ENCODE measurements at regions of chr6 and their contacts with region 1.

Region 1: GRCh38 chr6:125769147-125769783 is 19.8 kb downstream of the HEY2 start:
- DNase-seq: no peak
- ATAC-seq: no peak
- H3K4me3 ChIP-seq: no peak overlapping the region
- H3K4me3 Mint-ChIP-seq: no peak overlapping the region
- H3K27ac ChIP-seq: no peak overlapping the region
- H3K27ac Mint-ChIP-seq: no peak overlapping the region
- H3K4me1 ChIP-seq: no peaks in the 10 kb centered on the region
- H3K4me1 Mint-ChIP-seq: peaks cover 2% of the 10 kb centered on the region
- H3K27me3 ChIP-seq: no peaks in the 10 kb centered on the region
- H3K27me3 Mint-ChIP-seq: peaks cover 16% of the 10 kb centered on the region
- CTCF ChIP-seq: no peak

Region 2: DNA sequence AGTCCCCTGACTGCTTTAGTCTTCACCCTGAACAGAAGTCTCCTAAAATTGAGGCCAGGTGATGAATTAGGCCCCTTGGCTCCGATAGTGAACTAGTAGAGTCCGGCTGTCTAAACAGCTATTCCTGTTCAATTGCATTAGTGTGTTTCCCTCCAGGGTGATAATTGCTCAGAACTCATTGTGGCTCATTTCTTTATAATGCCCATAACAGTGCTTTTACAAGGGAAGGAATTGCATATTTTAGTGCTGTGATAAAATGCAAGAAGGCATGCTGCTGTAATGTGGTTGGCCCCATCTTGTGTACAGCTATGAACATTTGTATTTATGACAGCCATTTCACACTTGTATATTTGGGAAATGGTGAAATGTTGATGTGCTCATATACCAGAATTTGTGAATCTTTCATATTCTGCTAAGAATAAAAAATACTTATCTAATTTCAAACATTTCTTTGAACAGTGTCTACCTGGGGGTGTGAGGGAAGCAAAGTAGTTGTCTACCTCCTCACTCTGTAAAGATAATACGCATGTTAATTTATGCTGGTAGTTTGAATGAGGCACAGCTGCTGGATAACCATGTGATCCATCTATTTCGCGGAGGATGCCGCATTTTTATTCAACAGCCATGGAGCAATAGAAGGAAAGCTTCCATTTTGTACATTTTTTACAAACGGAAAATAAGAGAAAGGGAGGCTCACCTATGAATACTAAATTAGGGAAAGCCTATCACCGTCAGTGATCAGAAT is 1514.2 kb before region 1 on chr6:
- CTCF ChIA-PET with region 1: no interaction called
- POLR2A ChIA-PET with region 1: no interaction called
- intact Hi-C with region 1: no loop called
- DNase-seq: no peak
- ATAC-seq: no peak
- H3K4me3 ChIP-seq: no peak overlapping the region
- H3K4me3 Mint-ChIP-seq: no peak overlapping the region
- H3K27ac ChIP-seq: no peak overlapping the region
- H3K27ac Mint-ChIP-seq: no peak overlapping the region
- H3K4me1 ChIP-seq: no peaks in the 10 kb centered on the region
- H3K4me1 Mint-ChIP-seq: no peaks in the 10 kb centered on the region
- H3K27me3 ChIP-seq: no peaks in the 10 kb centered on the region
- H3K27me3 Mint-ChIP-seq: no peaks in the 10 kb centered on the region
- CTCF ChIP-seq: no peak

Region 3: DNA sequence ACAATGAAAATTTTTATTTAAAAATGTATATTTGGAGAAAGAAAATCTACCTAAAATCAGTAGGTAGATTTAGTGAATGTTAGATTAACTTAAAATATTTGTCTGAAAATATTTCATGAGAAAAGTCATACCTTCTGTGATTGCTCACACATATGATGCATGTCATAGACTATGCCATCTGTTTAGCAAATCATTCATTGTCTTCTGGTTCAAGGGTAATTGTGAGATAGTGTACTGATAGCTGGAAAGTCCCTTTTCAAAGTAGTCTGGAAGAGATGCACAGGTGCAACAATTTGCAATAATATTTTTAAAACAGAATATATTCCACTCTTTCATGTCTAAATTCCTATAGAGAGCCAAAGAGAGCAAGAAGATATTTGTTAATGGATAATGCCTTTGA is 828.0 kb before region 1 on chr6:
- CTCF ChIA-PET with region 1: no interaction called
- POLR2A ChIA-PET with region 1: no interaction called
- intact Hi-C with region 1: no loop called
- DNase-seq: no peak
- ATAC-seq: no peak
- H3K4me3 ChIP-seq: no peak overlapping the region
- H3K4me3 Mint-ChIP-seq: no peak overlapping the region
- H3K27ac ChIP-seq: no peak overlapping the region
- H3K27ac Mint-ChIP-seq: no peak overlapping the region
- H3K4me1 ChIP-seq: no peaks in the 10 kb centered on the region
- H3K4me1 Mint-ChIP-seq: no peaks in the 10 kb centered on the region
- H3K27me3 ChIP-seq: no peaks in the 10 kb centered on the region
- H3K27me3 Mint-ChIP-seq: peaks cover 2% of the 10 kb centered on the region
- CTCF ChIP-seq: no peak

Region 4: GRCh38 chr6:125153391-125154117 is 615.7 kb before region 1 on chr6 and contains the start of gene TPD52L1:
- CTCF ChIA-PET with region 1: interaction called, 3 read pairs
- POLR2A ChIA-PET with region 1: no interaction called
- intact Hi-C with region 1: loop called (anchors 1 to 2 kb)
- DNase-seq: peak; percentile 7 to 64 (median 39)
- ATAC-seq: peak; percentile 79
- H3K4me3 ChIP-seq: peak within 1 kb of the TSS; percentile 44 to 46
- H3K4me3 Mint-ChIP-seq: peak within 1 kb of the TSS; percentile 75
- H3K27ac ChIP-seq: no peak within 1 kb of the TSS
- H3K27ac Mint-ChIP-seq: no peak within 1 kb of the TSS
- H3K4me1 ChIP-seq: peaks cover 5% of the 10 kb centered on the region
- H3K4me1 Mint-ChIP-seq: peaks cover 8% of the 10 kb centered on the region
- H3K27me3 ChIP-seq: peaks cover 0 to 14% of the 10 kb centered on the region in 2 experiments
- H3K27me3 Mint-ChIP-seq: peaks cover 47% of the 10 kb centered on the region
- CTCF ChIP-seq: peak; percentile 39
- total RNA-seq, gene TPD52L1: not detected

Region 5: GRCh38 chr6:125363039-125363823 is 406.0 kb before region 1 on chr6:
- CTCF ChIA-PET with region 1: no interaction called
- POLR2A ChIA-PET with region 1: no interaction called
- intact Hi-C with region 1: no loop called
- DNase-seq: no peak
- ATAC-seq: no peak
- H3K4me3 ChIP-seq: no peak overlapping the region
- H3K4me3 Mint-ChIP-seq: no peak overlapping the region
- H3K27ac ChIP-seq: no peak overlapping the region
- H3K27ac Mint-ChIP-seq: no peak overlapping the region
- H3K4me1 ChIP-seq: no peaks in the 10 kb centered on the region
- H3K4me1 Mint-ChIP-seq: peaks cover 8% of the 10 kb centered on the region
- H3K27me3 ChIP-seq: peaks cover 0 to 4% of the 10 kb centered on the region in 2 experiments
- H3K27me3 Mint-ChIP-seq: peaks cover 45% of the 10 kb centered on the region
- CTCF ChIP-seq: no peak

Region 6: DNA sequence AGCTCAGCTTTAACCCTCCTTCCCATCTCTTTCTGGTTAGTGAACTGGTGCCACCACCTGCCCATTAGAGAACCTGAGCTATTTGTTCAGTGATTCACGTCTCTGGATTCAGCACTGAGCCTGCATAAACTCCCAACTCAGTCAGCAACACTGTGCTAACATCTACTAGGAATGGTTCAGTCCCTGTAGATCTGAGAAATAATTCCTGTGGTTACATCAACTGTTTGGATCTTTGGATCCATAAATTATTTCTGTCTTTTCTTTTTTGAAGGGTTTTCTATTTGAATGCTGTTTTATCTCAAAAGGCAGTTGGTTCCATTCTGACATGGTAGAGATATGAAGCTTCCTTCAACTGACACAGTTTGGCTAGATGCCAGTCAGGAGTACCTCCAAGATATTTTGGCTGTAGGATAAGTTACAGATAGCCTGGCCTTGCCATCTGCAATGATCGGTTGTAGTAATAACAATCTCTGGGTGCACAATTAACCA is 342.9 kb after region 1 on chr6:
- CTCF ChIA-PET with region 1: no interaction called
- POLR2A ChIA-PET with region 1: no interaction called
- intact Hi-C with region 1: no loop called
- DNase-seq: no peak
- ATAC-seq: no peak
- H3K4me3 ChIP-seq: no peak overlapping the region
- H3K4me3 Mint-ChIP-seq: no peak overlapping the region
- H3K27ac ChIP-seq: no peak overlapping the region
- H3K27ac Mint-ChIP-seq: no peak overlapping the region
- H3K4me1 ChIP-seq: no peaks in the 10 kb centered on the region
- H3K4me1 Mint-ChIP-seq: no peaks in the 10 kb centered on the region
- H3K27me3 ChIP-seq: no peaks in the 10 kb centered on the region
- H3K27me3 Mint-ChIP-seq: no peaks in the 10 kb centered on the region
- CTCF ChIP-seq: no peak

Measured in CD8-positive, alpha-beta T cell (primary cell).